IMR-90 (cell line): ENCODE measurements at regions of chr12 and their contacts with region 1.

Region 1: GRCh38 chr12:546921-547845 is 87.4 kb downstream of the B4GALNT3 start:
- DNase-seq: peak; percentile 26
- ATAC-seq: peak; percentile 95
- H3K4me3 ChIP-seq: no peak overlapping the region
- H3K27ac ChIP-seq: no peak overlapping the region
- H3K4me1 ChIP-seq: no peaks in the 10 kb centered on the region
- H3K27me3 ChIP-seq: peaks cover 64% of the 10 kb centered on the region
- CTCF ChIP-seq: peak; percentile 97
- POLR2A ChIP-seq: no peak
- RAD21 ChIP-seq: peak; percentile 99

Region 2: DNA sequence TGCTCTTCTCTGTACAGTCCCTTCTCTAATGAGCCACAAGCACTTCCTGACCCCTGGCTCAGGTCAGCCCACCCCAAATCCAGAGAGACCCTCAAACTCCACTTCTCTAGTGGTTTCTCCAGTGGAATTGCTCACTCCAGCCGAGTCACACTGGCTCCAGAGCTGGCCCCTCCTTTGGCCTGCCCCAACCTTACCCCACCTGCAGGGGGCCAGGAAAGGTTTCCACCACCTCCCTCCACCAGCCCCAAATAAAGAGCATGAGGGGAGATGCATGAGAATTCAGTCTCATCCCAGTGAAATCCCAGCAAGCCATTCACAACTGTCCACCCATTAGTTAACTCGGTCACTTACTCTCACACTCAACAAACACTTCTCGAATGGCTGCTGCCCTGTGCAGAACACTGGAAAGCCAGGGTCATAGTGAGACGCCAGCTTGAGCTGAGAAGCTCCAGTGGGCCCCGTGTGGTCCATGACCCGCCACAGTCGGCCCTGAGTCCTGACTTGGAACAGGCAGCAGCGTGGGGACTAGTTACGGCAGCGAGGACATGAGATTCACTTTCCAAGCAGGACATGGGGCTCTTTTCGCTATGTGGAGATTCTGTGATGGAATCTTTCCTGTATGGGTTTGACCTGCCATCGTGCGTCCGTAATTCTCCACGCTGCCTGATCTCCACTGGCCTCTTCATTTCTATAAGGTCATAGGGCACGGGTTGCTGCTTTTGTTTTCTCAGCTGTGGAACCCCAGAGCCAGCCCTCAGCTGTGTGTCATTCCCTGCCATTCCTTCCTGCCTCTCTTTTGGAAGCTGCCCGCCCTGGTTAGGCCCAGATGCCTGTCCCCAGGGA is 377.4 kb before region 1 on chr12:
- CTCF ChIA-PET with region 1: no interaction called
- POLR2A ChIA-PET with region 1: no interaction called
- dilution Hi-C with region 1: no loop called
- in situ Hi-C with region 1: no loop called
- intact Hi-C with region 1: no loop called
- DNase-seq: no peak
- ATAC-seq: no peak
- H3K4me3 ChIP-seq: no peak overlapping the region
- H3K27ac ChIP-seq: no peak overlapping the region
- H3K4me1 ChIP-seq: peaks cover 8% of the 10 kb centered on the region
- H3K27me3 ChIP-seq: peaks cover 4% of the 10 kb centered on the region; the same call in 1 of the 2 replicates
- CTCF ChIP-seq: peak; percentile 12; the same call in 1 of the 2 replicates
- POLR2A ChIP-seq: no peak
- RAD21 ChIP-seq: peak; percentile 24; the same call in 1 of the 2 replicates

Region 3: GRCh38 chr12:321607-322326 is 225.4 kb before region 1 on chr12:
- CTCF ChIA-PET with region 1: no interaction called
- POLR2A ChIA-PET with region 1: no interaction called
- dilution Hi-C with region 1: no loop called
- in situ Hi-C with region 1: no loop called
- intact Hi-C with region 1: loop called (anchors 10 kb)
- DNase-seq: no peak
- ATAC-seq: no peak
- H3K4me3 ChIP-seq: no peak overlapping the region
- H3K27ac ChIP-seq: no peak overlapping the region
- H3K4me1 ChIP-seq: no peaks in the 10 kb centered on the region
- H3K27me3 ChIP-seq: no peaks in the 10 kb centered on the region
- CTCF ChIP-seq: no peak
- POLR2A ChIP-seq: no peak
- RAD21 ChIP-seq: no peak

Region 4: DNA sequence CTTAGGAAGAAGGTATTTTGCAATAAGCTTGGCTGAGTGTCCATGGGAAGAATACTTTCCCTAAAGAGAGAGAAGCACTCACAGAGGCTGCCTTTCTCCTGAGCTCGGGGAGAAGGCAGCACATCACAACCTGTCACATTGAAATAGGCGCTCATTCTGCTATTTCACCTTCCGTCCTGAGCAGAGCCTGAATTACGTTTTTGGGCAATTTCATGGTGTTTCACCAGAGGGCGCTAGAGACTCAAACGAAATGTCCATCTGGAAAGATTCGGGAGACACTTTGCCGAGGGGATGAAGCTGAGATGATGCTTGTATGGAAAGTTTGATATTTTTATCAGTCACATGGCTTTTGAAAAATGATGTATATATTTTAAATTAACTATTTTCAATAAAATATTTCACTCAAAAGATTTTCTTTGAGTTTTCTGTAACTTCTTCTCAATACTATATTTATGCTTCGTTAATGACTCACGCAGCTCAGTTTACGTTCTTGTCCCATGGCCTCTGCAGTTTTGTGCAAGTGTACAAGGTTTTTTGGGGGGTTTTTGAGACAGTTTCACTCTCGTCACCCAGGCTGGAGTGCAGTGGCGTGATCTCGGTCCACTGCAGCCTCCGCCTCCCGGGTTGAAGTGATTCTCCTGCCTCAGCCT is 104.8 kb before region 1 on chr12:
- CTCF ChIA-PET with region 1: interaction called, 21 read pairs
- POLR2A ChIA-PET with region 1: no interaction called
- dilution Hi-C with region 1: no loop called
- in situ Hi-C with region 1: no loop called
- intact Hi-C with region 1: loop called (anchors 1 kb)
- DNase-seq: peak; percentile 42
- ATAC-seq: peak; percentile 84
- H3K4me3 ChIP-seq: no peak overlapping the region
- H3K27ac ChIP-seq: no peak overlapping the region
- H3K4me1 ChIP-seq: no peaks in the 10 kb centered on the region
- H3K27me3 ChIP-seq: peaks cover 2% of the 10 kb centered on the region; the same call in 1 of the 2 replicates
- CTCF ChIP-seq: peak; percentile 75
- POLR2A ChIP-seq: no peak
- RAD21 ChIP-seq: peak; percentile 71

Region 5: DNA sequence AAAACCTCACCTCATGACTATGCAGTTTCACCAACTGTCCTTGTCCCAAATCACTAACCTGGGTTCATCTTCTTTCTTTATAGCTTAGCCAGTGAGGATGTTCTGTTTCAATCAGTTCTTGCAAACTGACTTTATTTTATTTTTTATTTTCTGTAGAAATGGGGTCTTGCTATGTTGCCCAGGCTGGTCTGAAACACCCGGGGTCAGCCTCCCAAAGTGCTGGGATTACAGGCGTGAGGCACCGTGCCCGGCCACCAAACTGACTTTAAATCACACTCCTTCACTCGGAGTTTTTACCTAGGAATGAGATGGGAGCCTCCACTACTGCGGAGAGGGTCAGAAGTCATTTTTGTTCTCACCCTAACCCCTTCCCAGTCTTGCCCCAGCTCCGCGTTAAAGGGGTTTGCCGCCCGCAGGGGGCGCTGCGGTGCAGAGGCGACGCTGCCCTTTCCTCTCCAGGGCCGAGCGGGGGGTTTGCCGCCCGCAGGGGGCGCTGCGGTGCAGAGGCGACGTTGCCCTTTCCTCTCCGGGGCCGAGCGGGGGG is 94.4 kb before region 1 on chr12:
- CTCF ChIA-PET with region 1: interaction called, 7 read pairs
- POLR2A ChIA-PET with region 1: no interaction called
- dilution Hi-C with region 1: no loop called
- in situ Hi-C with region 1: no loop called
- intact Hi-C with region 1: loop called (anchors 1 kb)
- DNase-seq: no peak
- ATAC-seq: no peak
- H3K4me3 ChIP-seq: no peak overlapping the region
- H3K27ac ChIP-seq: no peak overlapping the region
- H3K4me1 ChIP-seq: no peaks in the 10 kb centered on the region
- H3K27me3 ChIP-seq: peaks cover 48% of the 10 kb centered on the region
- CTCF ChIP-seq: no peak
- POLR2A ChIP-seq: no peak
- RAD21 ChIP-seq: no peak

Region 6: DNA sequence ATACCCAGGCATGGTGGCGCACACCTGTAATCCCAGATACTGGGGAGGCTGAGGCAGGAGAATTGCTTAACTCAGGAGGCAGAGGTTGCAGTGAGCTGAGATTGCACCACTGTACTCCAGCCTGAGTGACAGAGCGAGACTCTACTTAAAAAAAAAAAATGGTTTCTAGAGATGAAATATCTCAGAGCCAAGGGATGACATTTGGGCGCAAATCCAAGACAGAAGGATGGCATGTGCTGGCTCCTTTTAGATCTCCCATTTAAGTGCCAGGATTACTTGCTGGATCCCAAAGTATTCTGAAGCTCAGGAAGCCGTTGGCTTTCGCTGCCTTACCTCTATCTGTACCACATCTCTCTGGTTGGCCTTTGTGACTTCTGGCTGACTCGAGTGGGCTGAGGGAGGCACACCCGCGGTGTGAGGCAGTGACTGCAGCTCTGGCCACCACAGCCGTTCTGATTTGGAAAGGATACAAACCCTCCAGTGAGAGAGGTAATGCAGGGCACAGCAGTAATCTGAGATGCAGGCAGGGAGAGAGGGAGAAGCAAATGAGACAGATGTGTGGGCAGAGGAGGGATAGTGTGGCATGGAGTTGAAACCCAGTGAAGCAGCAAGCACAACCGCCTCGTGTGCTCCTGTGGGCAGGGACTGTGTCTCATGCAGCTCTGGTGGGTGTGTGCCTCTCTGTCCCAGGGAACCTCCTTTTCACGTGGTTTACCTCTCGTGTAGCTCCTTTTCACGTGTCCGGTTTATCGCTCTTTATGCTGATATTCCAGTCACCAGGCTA is 82.5 kb before region 1 on chr12:
- CTCF ChIA-PET with region 1: no interaction called
- POLR2A ChIA-PET with region 1: no interaction called
- dilution Hi-C with region 1: no loop called
- in situ Hi-C with region 1: no loop called
- intact Hi-C with region 1: no loop called
- DNase-seq: no peak
- ATAC-seq: no peak
- H3K4me3 ChIP-seq: no peak overlapping the region
- H3K27ac ChIP-seq: no peak overlapping the region
- H3K4me1 ChIP-seq: no peaks in the 10 kb centered on the region
- H3K27me3 ChIP-seq: peaks cover 64% of the 10 kb centered on the region
- CTCF ChIP-seq: no peak
- POLR2A ChIP-seq: no peak
- RAD21 ChIP-seq: no peak

Region 7: GRCh38 chr12:530308-530707 is 16.9 kb before region 1 on chr12:
- CTCF ChIA-PET with region 1: no interaction called
- POLR2A ChIA-PET with region 1: no interaction called
- dilution Hi-C with region 1: no loop called
- in situ Hi-C with region 1: no loop called
- intact Hi-C with region 1: no loop called
- DNase-seq: no peak
- ATAC-seq: no peak
- H3K4me3 ChIP-seq: no peak overlapping the region
- H3K27ac ChIP-seq: no peak overlapping the region
- H3K4me1 ChIP-seq: peaks cover 4% of the 10 kb centered on the region; the same call in 1 of the 2 replicates
- H3K27me3 ChIP-seq: peaks cover 49% of the 10 kb centered on the region
- CTCF ChIP-seq: no peak
- POLR2A ChIP-seq: no peak
- RAD21 ChIP-seq: no peak

Region 8: GRCh38 chr12:823028-823698 is 276.0 kb after region 1 on chr12:
- CTCF ChIA-PET with region 1: no interaction called
- POLR2A ChIA-PET with region 1: no interaction called
- dilution Hi-C with region 1: no loop called
- in situ Hi-C with region 1: no loop called
- intact Hi-C with region 1: no loop called
- DNase-seq: no peak
- ATAC-seq: no peak
- H3K4me3 ChIP-seq: no peak overlapping the region
- H3K27ac ChIP-seq: no peak overlapping the region
- H3K4me1 ChIP-seq: no peaks in the 10 kb centered on the region
- H3K27me3 ChIP-seq: no peaks in the 10 kb centered on the region
- CTCF ChIP-seq: no peak
- POLR2A ChIP-seq: no peak
- RAD21 ChIP-seq: no peak